Gastrocnemius medialis (tissue), 4 donors: ENCODE measurements at regions of chr10 and their contacts with region 1.

Region 1: GRCh38 chr10:73848821-73849489 is 25.4 kb downstream of the CAMK2G start:
- DNase-seq: peak; percentile 58 to 74
- ATAC-seq: peak; percentile 82 to 85
- H3K4me3 ChIP-seq: no peak overlapping the region
- H3K27ac ChIP-seq: peak overlapping the region; percentile 43 to 73 (median 44)
- H3K4me1 ChIP-seq: peaks cover 11 to 16% of the 10 kb centered on the region in 2 donors
- H3K27me3 ChIP-seq: no peaks in the 10 kb centered on the region
- CTCF ChIP-seq: peak; percentile 99 to 100 (median 100)
- POLR2A ChIP-seq: no peak

Region 2: GRCh38 chr10:73424516-73424915 is 424.4 kb before region 1 on chr10:
- in situ Hi-C with region 1: no loop called
- intact Hi-C with region 1: no loop called
- DNase-seq: no peak
- ATAC-seq: no peak
- H3K4me3 ChIP-seq: no peak overlapping the region
- H3K27ac ChIP-seq: peak overlapping the region in 1 of 4 donors; percentile 2
- H3K4me1 ChIP-seq: peaks cover 4 to 11% of the 10 kb centered on the region in 2 donors
- H3K27me3 ChIP-seq: no peaks in the 10 kb centered on the region
- CTCF ChIP-seq: no peak
- POLR2A ChIP-seq: no peak

Region 3: GRCh38 chr10:73865459-73866442 is 16.8 kb after region 1 on chr10:
- in situ Hi-C with region 1: no loop called
- intact Hi-C with region 1: loop called (anchors 2 kb)
- DNase-seq: no peak
- ATAC-seq: no peak
- H3K4me3 ChIP-seq: no peak overlapping the region
- H3K27ac ChIP-seq: peak overlapping the region; percentile 15 to 93 (median 60)
- H3K4me1 ChIP-seq: peaks cover 64 to 72% of the 10 kb centered on the region in 2 donors
- H3K27me3 ChIP-seq: no peaks in the 10 kb centered on the region
- CTCF ChIP-seq: no peak
- POLR2A ChIP-seq: no peak